PC-3 (cell line): ENCODE measurements at regions of chr7 and their contacts with region 1.

Region 1: GRCh38 chr7:4479367-4480039 is 202.6 kb upstream of the FOXK1 start:
- DNase-seq: peak; percentile 83
- ATAC-seq: peak; percentile 96
- H3K4me3 ChIP-seq: no peak overlapping the region
- H3K27ac ChIP-seq: no peak overlapping the region
- H3K4me1 ChIP-seq: no peaks in the 10 kb centered on the region
- H3K27me3 ChIP-seq: no peaks in the 10 kb centered on the region
- CTCF ChIP-seq: peak; percentile 73

Region 2: GRCh38 chr7:3695602-3696001 is 783.9 kb before region 1 on chr7:
- CTCF ChIA-PET with region 1: no interaction called
- POLR2A ChIA-PET with region 1: no interaction called
- intact Hi-C with region 1: loop called (anchors 1 kb)
- DNase-seq: peak; percentile 38
- ATAC-seq: peak; percentile 90
- H3K4me3 ChIP-seq: no peak overlapping the region
- H3K27ac ChIP-seq: no peak overlapping the region
- H3K4me1 ChIP-seq: no peaks in the 10 kb centered on the region
- H3K27me3 ChIP-seq: no peaks in the 10 kb centered on the region
- CTCF ChIP-seq: peak; percentile 77

Region 3: DNA sequence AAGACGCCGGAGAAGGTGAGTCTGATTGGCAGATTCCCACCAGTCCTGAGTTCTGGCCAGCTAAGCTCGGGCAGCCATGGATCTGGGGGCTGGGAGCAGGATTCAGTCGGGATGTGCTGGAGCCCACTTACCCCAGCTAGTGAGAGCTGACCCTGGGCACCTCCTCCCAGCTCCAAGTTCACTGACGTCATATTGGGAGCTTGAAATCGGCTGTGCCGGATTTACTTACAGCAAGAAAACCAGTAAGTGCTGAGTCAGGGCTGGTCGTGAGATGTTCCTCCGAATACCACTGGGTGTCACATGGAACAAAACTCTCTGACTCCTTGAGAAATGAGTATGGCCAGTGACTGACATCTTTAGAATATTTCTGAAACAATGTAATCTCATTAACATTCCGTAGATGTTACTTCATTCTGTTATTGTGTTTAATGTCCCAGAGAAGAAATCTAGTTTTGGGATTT is 557.3 kb before region 1 on chr7:
- CTCF ChIA-PET with region 1: interaction called, 3 read pairs
- POLR2A ChIA-PET with region 1: no interaction called
- intact Hi-C with region 1: loop called (anchors 1 kb)
- DNase-seq: peak; percentile 85
- ATAC-seq: peak; percentile 98
- H3K4me3 ChIP-seq: no peak overlapping the region
- H3K27ac ChIP-seq: peak overlapping the region; percentile 40
- H3K4me1 ChIP-seq: peaks cover 13% of the 10 kb centered on the region
- H3K27me3 ChIP-seq: no peaks in the 10 kb centered on the region
- CTCF ChIP-seq: peak; percentile 51

Region 4: DNA sequence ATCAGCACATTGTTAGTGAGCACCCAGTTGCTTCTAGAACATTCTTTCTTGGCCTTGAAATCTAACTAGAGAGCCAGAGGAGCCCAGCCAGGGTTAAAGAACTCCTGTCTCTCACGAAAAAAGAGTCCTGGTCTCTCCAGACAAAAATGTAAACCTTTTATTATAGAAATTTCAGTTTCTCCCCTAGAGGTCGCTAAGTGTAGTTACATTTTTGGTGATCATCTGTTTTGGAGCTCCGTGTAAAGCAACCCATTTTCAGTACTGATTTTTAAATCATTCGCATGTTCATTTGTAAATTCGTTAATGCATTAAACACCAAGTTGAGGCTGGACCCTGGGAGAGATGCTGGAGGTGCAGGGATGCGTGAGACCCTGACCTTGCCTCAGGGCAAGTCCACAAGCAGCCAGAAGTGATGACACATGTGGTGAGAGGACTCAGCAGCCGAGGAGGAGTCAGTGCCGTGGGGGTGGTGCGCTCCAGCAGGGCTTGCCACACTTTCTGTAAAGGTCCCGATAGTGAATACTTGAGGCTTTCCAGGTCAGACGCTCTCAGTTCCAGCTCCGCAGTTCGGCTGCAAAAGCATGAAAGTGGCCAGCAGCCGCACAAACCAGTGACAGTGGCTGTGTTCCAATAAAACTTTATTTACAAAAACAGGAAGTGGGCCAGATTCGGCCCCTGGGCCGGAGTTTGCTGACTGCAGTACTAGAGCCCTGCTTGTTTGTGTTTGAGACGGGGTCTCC is 376.0 kb before region 1 on chr7:
- CTCF ChIA-PET with region 1: no interaction called
- POLR2A ChIA-PET with region 1: no interaction called
- intact Hi-C with region 1: loop called (anchors 10 kb)
- DNase-seq: peak; percentile 67
- ATAC-seq: peak; percentile 93
- H3K4me3 ChIP-seq: peak overlapping the region; percentile 33; the same call in 1 of the 2 replicates
- H3K27ac ChIP-seq: peak overlapping the region; percentile 36; the same call in 1 of the 2 replicates
- H3K4me1 ChIP-seq: peaks cover 5% of the 10 kb centered on the region
- H3K27me3 ChIP-seq: no peaks in the 10 kb centered on the region
- CTCF ChIP-seq: peak; percentile 69